ENCODE measurements at regions of chr5 and their contacts with region 1.

Region 1: GRCh38 chr5:160418561-160419457 is at the start of gene SLU7:
- DNase-seq: peak; percentile 88
- ATAC-seq: peak; percentile 81
- H3K4me3 Mint-ChIP-seq: peak within 1 kb of the TSS; percentile 91
- H3K27ac Mint-ChIP-seq: peak within 1 kb of the TSS; percentile 90
- H3K4me1 Mint-ChIP-seq: peaks cover 72% of the 10 kb centered on the region
- H3K27me3 Mint-ChIP-seq: no peaks in the 10 kb centered on the region
- CTCF ChIP-seq: no peak
- total RNA-seq, gene SLU7: 58.5 and 59.3 TPM in 2 replicates

Region 2: GRCh38 chr5:160434022-160434531 is 15.3 kb after region 1 on chr5:
- CTCF ChIA-PET with region 1: interaction called, 33 read pairs
- POLR2A ChIA-PET with region 1: interaction called, 32 read pairs
- intact Hi-C with region 1: loop called (anchors 1 kb)
- DNase-seq: peak; percentile 59
- ATAC-seq: peak; percentile 72
- H3K4me3 Mint-ChIP-seq: peak overlapping the region; percentile 48
- H3K27ac Mint-ChIP-seq: peak overlapping the region; percentile 3
- H3K4me1 Mint-ChIP-seq: peaks cover 62% of the 10 kb centered on the region
- H3K27me3 Mint-ChIP-seq: no peaks in the 10 kb centered on the region
- CTCF ChIP-seq: no peak

Region 3: DNA sequence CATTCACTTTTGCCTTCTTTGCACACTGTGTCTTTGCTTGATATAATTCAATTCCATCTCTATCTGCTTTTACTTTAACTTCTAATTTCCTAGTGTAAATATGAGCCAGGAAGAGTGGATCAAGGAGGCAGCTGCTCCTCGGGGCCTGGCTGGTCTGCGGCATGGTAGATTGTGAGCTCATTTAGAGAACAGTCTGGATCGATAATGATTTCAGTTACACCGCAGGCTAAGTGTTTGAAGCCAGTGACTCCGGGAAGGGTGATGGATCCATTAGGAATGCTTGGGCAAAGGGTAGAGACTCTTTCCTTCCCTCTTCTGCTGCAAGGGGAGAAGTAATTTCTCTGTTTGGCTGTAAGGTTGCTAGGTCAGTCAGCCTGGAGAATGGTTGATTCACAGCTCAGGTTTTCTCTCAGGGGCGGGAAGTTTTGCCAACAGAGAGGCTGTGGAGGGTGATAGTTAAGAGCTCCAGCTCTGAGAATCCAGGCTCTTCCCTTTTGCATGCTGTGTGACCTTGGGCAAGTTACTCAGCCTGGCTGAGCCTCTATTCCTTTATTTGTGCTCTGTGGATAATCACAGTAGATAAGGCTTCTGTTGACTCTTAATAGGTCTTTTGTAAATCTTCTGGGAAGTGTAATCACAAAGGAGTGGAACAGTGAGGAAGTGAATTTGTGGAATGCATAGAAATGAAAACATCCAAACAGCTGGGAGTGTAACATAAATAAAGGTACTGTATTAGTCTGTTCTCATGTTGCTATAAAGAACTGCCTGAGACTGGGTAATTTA is 102.0 kb after region 1 on chr5:
- CTCF ChIA-PET with region 1: no interaction called
- POLR2A ChIA-PET with region 1: no interaction called
- intact Hi-C with region 1: no loop called
- DNase-seq: no peak
- ATAC-seq: no peak
- H3K4me3 Mint-ChIP-seq: no peak overlapping the region
- H3K27ac Mint-ChIP-seq: no peak overlapping the region
- H3K4me1 Mint-ChIP-seq: no peaks in the 10 kb centered on the region
- H3K27me3 Mint-ChIP-seq: no peaks in the 10 kb centered on the region
- CTCF ChIP-seq: no peak

Region 4: GRCh38 chr5:161467703-161468102 is 1048.9 kb after region 1 on chr5:
- CTCF ChIA-PET with region 1: no interaction called
- POLR2A ChIA-PET with region 1: no interaction called
- intact Hi-C with region 1: no loop called
- DNase-seq: no peak
- ATAC-seq: no peak
- H3K4me3 Mint-ChIP-seq: no peak overlapping the region
- H3K27ac Mint-ChIP-seq: no peak overlapping the region
- H3K4me1 Mint-ChIP-seq: no peaks in the 10 kb centered on the region
- H3K27me3 Mint-ChIP-seq: no peaks in the 10 kb centered on the region
- CTCF ChIP-seq: no peak